ENCODE measurements at regions of chr10 and their contacts with region 1.

Region 1: DNA sequence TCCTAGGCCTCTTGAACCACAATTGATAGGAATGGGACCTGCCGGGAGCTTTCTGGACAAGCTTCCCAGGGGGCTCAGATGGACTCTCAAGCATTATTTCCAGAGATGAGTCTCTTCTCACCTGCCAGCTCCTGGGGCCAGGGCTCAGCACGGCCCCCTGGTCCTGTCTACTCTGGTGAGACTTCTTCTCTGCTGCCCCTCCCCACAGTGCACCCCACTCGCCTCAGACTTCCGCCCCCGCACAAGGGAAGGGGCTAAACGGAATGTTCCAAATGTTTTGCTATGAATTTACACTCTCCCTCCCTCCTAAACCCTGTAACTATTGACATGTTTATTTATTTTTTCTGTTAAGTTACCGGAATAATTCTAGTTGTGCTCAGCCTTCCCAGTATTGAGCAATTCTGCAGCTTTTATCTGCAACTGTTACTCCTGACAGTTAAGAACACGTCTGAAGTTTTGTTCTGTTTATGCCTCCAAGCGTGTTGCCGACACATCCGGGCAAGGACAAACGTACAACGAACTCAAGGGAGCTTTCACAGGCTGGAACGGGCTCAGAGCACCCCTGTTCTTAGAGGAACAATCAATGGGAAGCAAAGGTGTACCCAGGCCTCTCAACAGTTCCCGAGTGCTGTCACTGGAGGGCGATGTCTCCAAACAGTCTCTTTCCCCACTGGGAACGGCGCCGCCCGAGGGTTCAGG is 55.2 kb downstream of the FHIP2A start:
- DNase-seq: peak; percentile 54 to 83 (median 57)
- ATAC-seq: peak; percentile 93
- H3K4me3 ChIP-seq: no peak overlapping the region
- H3K27ac ChIP-seq: no peak overlapping the region
- H3K4me1 ChIP-seq: peaks cover 0 to 20% of the 10 kb centered on the region in 2 donors
- H3K27me3 ChIP-seq: no peaks in the 10 kb centered on the region
- CTCF ChIP-seq: peak; percentile 36 to 46

Region 2: DNA sequence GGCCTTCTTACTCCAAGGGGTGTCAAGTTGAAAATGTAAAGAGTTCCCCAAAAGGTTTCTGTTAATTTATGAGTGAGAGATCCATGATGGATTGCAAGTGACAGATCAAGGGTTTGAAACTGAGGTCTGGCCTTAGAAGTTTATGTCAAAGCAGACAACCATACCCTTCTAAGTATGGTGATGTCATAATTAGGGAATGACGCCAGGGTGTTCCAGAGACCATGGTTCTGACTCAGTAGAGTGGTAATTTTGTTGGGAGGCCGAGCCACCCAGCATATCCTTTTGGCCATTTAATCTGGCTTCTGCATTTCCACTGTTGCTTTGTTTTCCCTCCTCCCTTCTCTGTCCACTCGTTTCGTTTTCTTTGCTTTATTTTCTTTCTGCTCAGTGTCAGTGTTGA is 64.0 kb after region 1 on chr10:
- intact Hi-C with region 1: no loop called
- DNase-seq: no peak
- ATAC-seq: no peak
- H3K4me3 ChIP-seq: no peak overlapping the region
- H3K27ac ChIP-seq: no peak overlapping the region
- H3K4me1 ChIP-seq: peaks cover 11 to 18% of the 10 kb centered on the region in 2 donors
- H3K27me3 ChIP-seq: no peaks in the 10 kb centered on the region
- CTCF ChIP-seq: no peak

Region 3: GRCh38 chr10:114982989-114983388 is 106.2 kb after region 1 on chr10:
- intact Hi-C with region 1: no loop called
- DNase-seq: no peak
- ATAC-seq: no peak
- H3K4me3 ChIP-seq: no peak overlapping the region
- H3K27ac ChIP-seq: no peak overlapping the region
- H3K4me1 ChIP-seq: no peaks in the 10 kb centered on the region
- H3K27me3 ChIP-seq: no peaks in the 10 kb centered on the region
- CTCF ChIP-seq: no peak

Region 4: DNA sequence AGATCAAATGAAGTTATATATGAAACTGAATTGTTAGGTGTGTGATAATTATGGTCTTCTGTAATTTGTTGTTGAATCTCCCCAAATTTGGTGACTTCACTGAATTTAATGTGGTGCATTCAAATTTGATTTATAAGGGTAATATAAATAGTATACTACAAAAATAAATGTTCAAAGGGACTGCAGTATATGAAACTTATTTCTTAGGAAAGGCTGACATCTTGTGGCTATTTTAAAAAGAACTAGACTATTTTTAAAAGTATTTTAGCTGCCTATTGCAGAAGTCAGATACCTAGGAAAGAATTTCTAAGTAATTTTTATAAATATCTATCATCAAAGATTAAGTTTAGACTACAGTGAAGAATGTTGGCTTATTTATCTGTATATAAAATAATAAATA is 253.0 kb after region 1 on chr10:
- intact Hi-C with region 1: loop called in 1 of 2 experiments (anchors 10 kb)
- DNase-seq: peak in 2 of 4 donors; percentile 35 to 44
- ATAC-seq: peak; percentile 34
- H3K4me3 ChIP-seq: no peak overlapping the region
- H3K27ac ChIP-seq: no peak overlapping the region
- H3K4me1 ChIP-seq: no peaks in the 10 kb centered on the region
- H3K27me3 ChIP-seq: no peaks in the 10 kb centered on the region
- CTCF ChIP-seq: peak in 1 of 2 donors; percentile 35

Region 5: GRCh38 chr10:116026315-116026714 is 1149.6 kb after region 1 on chr10:
- intact Hi-C with region 1: no loop called
- DNase-seq: no peak
- ATAC-seq: no peak
- H3K4me3 ChIP-seq: no peak overlapping the region
- H3K27ac ChIP-seq: no peak overlapping the region
- H3K4me1 ChIP-seq: no peaks in the 10 kb centered on the region
- H3K27me3 ChIP-seq: no peaks in the 10 kb centered on the region
- CTCF ChIP-seq: no peak

Measured in left lung (tissue), 14 donors.